ENCODE measurements at regions of chr16 and their contacts with region 1.

Region 1: GRCh38 chr16:89860747-89861304 is 12.6 kb upstream of the TCF25 start:
- DNase-seq: peak; percentile 95
- H3K4me3 Mint-ChIP-seq: no peak overlapping the region
- H3K27ac Mint-ChIP-seq: no peak overlapping the region
- H3K4me1 Mint-ChIP-seq: peaks cover 27% of the 10 kb centered on the region
- H3K27me3 Mint-ChIP-seq: peaks cover 1% of the 10 kb centered on the region

Region 2: GRCh38 chr16:89241187-89242007 is 619.4 kb before region 1 on chr16:
- intact Hi-C with region 1: loop called (anchors 10 kb)
- DNase-seq: peak; percentile 93
- H3K4me3 Mint-ChIP-seq: peak overlapping the region; percentile 100
- H3K27ac Mint-ChIP-seq: peak overlapping the region; percentile 100
- H3K4me1 Mint-ChIP-seq: peaks cover 15% of the 10 kb centered on the region
- H3K27me3 Mint-ChIP-seq: no peaks in the 10 kb centered on the region

Region 3: DNA sequence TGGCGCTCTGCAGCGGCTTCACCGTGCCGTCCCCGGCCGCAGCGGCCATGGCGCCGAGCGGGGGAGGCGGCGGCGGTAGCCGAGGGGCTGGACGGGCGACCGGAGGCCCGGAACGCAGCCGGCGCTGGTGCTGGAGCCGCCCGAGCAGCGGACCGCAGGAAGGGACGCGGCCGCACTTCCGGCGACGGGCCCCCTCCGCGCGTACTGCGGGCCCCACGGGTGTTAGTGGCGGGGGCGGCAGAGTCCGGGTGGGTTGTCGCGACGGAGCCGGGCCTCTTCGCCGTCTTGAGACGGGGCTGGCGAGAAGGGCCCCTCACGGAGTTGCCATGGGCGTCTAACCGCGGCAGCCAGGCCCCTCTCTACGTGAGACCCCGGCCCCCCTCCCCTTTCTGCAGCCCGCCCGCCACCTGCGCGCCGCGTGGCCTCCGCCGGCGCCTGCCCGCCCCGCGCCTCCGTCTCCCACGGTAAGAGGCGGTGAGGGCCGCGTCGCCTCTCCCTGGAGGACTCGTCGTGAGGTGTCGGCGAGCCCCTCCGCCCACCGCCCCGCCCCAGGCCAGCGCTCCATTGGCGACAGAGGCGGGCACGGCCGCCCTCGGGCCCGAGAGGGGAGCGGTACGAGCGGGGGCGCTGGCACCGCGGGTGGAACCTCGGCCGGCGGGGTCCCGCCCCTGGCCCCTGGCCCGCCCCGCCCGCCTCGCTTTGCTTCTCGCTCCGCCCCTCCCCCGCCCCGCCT is 139.8 kb before region 1 on chr16 and contains the starts of genes VPS9D1 and ZNF276:
- intact Hi-C with region 1: loop called (anchors 2 kb)
- DNase-seq: peak; percentile 94
- H3K4me3 Mint-ChIP-seq: peak within 1 kb of the TSS; percentile 90
- H3K27ac Mint-ChIP-seq: peak within 1 kb of the TSS; percentile 92
- H3K4me1 Mint-ChIP-seq: peaks cover 37% of the 10 kb centered on the region
- H3K27me3 Mint-ChIP-seq: no peaks in the 10 kb centered on the region
- total RNA-seq, gene VPS9D1: 3.6 and 3.9 TPM in 2 replicates
- total RNA-seq, gene ZNF276: 32.9 and 33.3 TPM in 2 replicates

Region 4: DNA sequence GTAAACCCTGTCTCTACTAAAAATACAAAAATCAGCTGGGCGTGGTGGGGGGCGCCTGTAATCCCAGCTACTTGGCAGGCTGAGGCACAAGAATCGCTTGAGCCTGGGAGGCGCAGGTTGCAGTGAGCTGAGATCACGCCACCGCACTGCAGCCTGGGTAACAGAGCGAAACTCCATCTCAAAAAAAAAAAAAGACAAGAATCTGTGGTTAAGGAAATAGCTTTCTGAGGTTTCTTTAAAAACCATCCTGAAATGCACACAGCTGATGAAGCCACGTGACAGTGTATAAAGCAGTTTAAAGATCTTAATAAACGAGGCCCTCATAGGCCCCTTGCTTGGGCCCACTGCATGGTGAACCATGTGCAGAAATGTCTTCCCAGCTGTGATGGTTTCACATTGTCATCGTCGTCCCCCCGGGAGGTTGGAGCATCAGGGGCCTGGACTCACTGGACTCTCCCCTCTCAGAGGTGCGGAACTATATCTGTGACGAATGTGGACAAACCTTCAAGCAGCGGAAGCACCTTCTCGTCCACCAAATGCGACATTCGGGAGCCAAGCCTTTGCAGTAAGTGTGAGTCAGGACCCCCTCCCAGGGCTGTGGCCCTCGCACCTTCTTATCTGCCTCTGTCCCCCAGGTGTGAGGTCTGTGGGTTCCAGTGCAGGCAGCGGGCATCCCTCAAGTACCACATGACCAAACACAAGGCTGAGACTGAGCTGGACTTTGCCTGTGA is 123.3 kb before region 1 on chr16:
- intact Hi-C with region 1: loop called (anchors 5 kb)
- DNase-seq: peak; percentile 85
- H3K4me3 Mint-ChIP-seq: peak overlapping the region; percentile 32
- H3K27ac Mint-ChIP-seq: peak overlapping the region; percentile 70
- H3K4me1 Mint-ChIP-seq: peaks cover 20% of the 10 kb centered on the region
- H3K27me3 Mint-ChIP-seq: no peaks in the 10 kb centered on the region